Activated CD8-positive, alpha-beta T cell treated with anti-CD3 and anti-CD28 coated beads for 36 hours (primary cell): ENCODE measurements at regions of chr12 and their contacts with region 1.

Region 1: GRCh38 chr12:53159195-53159839 is 21.2 kb upstream of the ZNF740 start:
- DNase-seq: peak; percentile 97
- ATAC-seq: peak; percentile 100
- H3K4me3 Mint-ChIP-seq: peak overlapping the region; percentile 11
- H3K27ac Mint-ChIP-seq: peak overlapping the region; percentile 62
- H3K4me1 Mint-ChIP-seq: peaks cover 10% of the 10 kb centered on the region
- H3K27me3 Mint-ChIP-seq: no peaks in the 10 kb centered on the region
- CTCF ChIP-seq: peak; percentile 96

Region 2: DNA sequence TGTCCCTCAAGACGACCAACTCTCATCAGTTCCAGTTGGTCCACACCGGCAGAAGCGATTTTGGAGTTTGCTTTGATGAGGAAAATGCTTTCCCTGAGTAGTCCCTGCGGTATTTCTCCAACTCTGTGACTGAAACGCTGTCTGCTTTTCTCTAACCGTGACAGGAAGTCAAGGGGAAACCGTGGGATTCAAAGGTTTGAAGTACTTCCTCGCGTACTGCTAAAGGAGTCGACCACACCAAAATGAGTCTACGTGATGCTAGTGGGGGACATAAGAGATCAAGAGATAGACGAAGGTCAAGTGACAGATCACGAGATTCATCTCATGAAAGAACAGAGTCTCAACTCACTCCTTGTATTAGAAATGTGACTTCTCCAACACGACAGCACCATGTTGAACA is 410.7 kb before region 1 on chr12:
- CTCF ChIA-PET with region 1: no interaction called
- POLR2A ChIA-PET with region 1: no interaction called
- intact Hi-C with region 1: no loop called
- DNase-seq: no peak
- ATAC-seq: no peak
- H3K4me3 Mint-ChIP-seq: no peak overlapping the region
- H3K27ac Mint-ChIP-seq: no peak overlapping the region
- H3K4me1 Mint-ChIP-seq: peaks cover 12% of the 10 kb centered on the region
- H3K27me3 Mint-ChIP-seq: peaks cover 1% of the 10 kb centered on the region
- CTCF ChIP-seq: no peak

Region 3: GRCh38 chr12:53098982-53099651 is 60.2 kb before region 1 on chr12:
- CTCF ChIA-PET with region 1: interaction called, 16 read pairs
- POLR2A ChIA-PET with region 1: no interaction called
- intact Hi-C with region 1: no loop called
- DNase-seq: peak; percentile 97
- ATAC-seq: peak; percentile 52
- H3K4me3 Mint-ChIP-seq: peak overlapping the region; percentile 69
- H3K27ac Mint-ChIP-seq: peak overlapping the region; percentile 86
- H3K4me1 Mint-ChIP-seq: peaks cover 51% of the 10 kb centered on the region
- H3K27me3 Mint-ChIP-seq: peaks cover 2% of the 10 kb centered on the region
- CTCF ChIP-seq: peak; percentile 93

Region 4: DNA sequence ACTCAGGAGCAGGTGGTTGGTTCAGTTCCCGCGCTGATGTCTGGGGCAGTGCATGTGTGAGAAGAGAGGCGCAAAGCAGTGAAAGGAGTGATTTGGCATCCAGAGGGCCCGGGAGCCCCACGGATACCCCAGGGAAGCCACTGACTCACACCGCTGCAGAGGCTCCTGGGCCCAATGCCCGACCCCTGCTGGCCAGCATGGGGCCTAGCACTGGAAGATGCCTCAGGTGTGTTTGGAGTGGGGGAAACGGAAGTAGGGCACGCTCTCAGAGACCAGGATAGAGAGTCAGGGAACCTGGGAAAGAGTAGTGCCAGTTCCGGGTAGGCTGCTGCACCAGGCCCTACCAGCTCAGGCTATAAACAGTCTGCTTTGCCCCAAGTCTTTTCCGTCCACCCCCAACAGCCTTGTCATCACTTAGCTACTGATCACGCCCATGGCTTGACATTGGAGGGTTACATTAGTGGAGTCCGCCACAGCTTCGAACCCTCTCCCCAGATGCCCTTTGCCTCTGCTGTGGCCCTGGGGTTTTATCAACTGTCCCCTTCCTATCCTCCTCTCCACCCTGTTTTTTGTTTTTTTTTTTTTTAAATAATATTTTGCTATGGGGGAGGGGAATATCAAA is 30.9 kb after region 1 on chr12:
- CTCF ChIA-PET with region 1: interaction called, 199 read pairs
- POLR2A ChIA-PET with region 1: interaction called, 13 read pairs
- intact Hi-C with region 1: no loop called
- DNase-seq: peak; percentile 67
- ATAC-seq: peak; percentile 94
- H3K4me3 Mint-ChIP-seq: no peak overlapping the region
- H3K27ac Mint-ChIP-seq: peak overlapping the region; percentile 77
- H3K4me1 Mint-ChIP-seq: peaks cover 17% of the 10 kb centered on the region
- H3K27me3 Mint-ChIP-seq: no peaks in the 10 kb centered on the region
- CTCF ChIP-seq: peak; percentile 77

Region 5: GRCh38 chr12:53213348-53213747 is 54.0 kb after region 1 on chr12:
- CTCF ChIA-PET with region 1: interaction called, 34 read pairs
- POLR2A ChIA-PET with region 1: interaction called, 5 read pairs
- intact Hi-C with region 1: loop called (anchors 5 kb)
- DNase-seq: peak; percentile 90
- ATAC-seq: peak; percentile 63
- H3K4me3 Mint-ChIP-seq: no peak overlapping the region
- H3K27ac Mint-ChIP-seq: no peak overlapping the region
- H3K4me1 Mint-ChIP-seq: peaks cover 68% of the 10 kb centered on the region
- H3K27me3 Mint-ChIP-seq: no peaks in the 10 kb centered on the region
- CTCF ChIP-seq: peak; percentile 97

Region 6: DNA sequence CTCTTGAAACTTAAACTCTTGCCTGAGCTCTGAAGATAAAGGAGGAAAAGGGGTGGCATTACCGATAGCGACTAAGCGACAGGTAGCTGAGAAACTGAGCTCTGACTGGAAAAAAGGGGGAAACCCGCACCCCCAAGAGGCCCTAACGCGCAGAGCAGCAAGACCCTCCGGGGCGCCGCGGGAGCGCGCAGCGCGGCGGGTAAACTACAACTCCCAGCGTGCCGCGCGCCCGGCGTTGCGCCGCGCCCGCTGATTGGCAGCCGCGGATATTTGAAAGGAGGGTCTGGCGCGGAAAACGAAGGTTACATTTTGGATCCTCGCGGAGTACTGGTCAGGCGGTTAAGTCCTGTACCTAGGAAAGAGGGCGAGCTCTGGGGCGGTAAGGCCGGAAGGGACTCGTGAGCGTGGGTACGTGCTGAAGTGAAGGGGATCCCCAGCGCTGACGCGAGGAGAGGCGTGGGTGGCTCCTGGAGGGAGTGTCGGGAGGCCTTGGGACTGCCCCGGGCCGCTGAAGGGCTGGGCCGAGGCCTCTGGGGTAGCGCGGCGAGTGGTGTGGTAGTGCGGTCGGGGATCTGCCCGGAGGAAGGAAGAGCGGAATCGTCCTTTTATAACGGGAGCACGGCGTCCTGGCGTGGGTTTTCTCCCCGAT is 108.8 kb after region 1 on chr12 and contains the start of gene ESPL1:
- CTCF ChIA-PET with region 1: interaction called, 44 read pairs
- POLR2A ChIA-PET with region 1: interaction called, 3 read pairs
- intact Hi-C with region 1: no loop called
- DNase-seq: peak; percentile 95
- ATAC-seq: peak; percentile 89
- H3K4me3 Mint-ChIP-seq: peak within 1 kb of the TSS; percentile 94
- H3K27ac Mint-ChIP-seq: peak within 1 kb of the TSS; percentile 97
- H3K4me1 Mint-ChIP-seq: peaks cover 33% of the 10 kb centered on the region
- H3K27me3 Mint-ChIP-seq: no peaks in the 10 kb centered on the region
- CTCF ChIP-seq: peak; percentile 56
- total RNA-seq, gene ESPL1: 62.1 to 63.4 TPM

Region 7: GRCh38 chr12:53321074-53321814 is 161.9 kb after region 1 on chr12 and contains the start of gene AAAS:
- CTCF ChIA-PET with region 1: interaction called, 61 read pairs
- POLR2A ChIA-PET with region 1: no interaction called
- intact Hi-C with region 1: no loop called
- DNase-seq: peak; percentile 99
- ATAC-seq: peak; percentile 87
- H3K4me3 Mint-ChIP-seq: peak within 1 kb of the TSS; percentile 83
- H3K27ac Mint-ChIP-seq: peak within 1 kb of the TSS; percentile 96
- H3K4me1 Mint-ChIP-seq: peaks cover 41% of the 10 kb centered on the region
- H3K27me3 Mint-ChIP-seq: no peaks in the 10 kb centered on the region
- CTCF ChIP-seq: peak; percentile 100
- total RNA-seq, gene AAAS: 81.3 to 87.6 TPM